ENCODE measurements at regions of chr1 and their contacts with region 1.

Region 1: DNA sequence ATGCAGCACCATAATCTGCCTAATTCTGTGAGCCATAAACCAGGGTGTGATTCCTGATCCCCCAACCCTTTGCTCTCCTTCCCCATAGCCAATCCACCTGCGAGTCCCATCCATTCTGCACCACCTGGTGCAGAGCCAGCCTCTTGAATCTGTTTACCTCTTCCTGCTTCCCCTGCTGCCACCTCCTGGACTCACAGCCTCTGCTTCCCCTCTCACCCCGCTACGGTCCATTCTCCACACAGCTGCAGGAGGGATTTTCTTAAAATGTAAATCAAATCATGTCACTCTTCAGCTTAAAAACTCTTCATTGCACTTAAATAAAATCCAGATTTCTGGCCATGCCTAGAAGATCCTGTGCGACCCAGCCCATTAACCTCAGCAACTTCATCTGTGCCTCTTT is 186.7 kb downstream of the FOXD2 start:
- DNase-seq: peak; percentile 10
- H3K4me3 ChIP-seq: no peak overlapping the region
- H3K27ac ChIP-seq: no peak overlapping the region
- H3K4me1 ChIP-seq: no peaks in the 10 kb centered on the region
- H3K27me3 ChIP-seq: no peaks in the 10 kb centered on the region
- CTCF ChIP-seq: peak; percentile 39 to 72

Region 2: DNA sequence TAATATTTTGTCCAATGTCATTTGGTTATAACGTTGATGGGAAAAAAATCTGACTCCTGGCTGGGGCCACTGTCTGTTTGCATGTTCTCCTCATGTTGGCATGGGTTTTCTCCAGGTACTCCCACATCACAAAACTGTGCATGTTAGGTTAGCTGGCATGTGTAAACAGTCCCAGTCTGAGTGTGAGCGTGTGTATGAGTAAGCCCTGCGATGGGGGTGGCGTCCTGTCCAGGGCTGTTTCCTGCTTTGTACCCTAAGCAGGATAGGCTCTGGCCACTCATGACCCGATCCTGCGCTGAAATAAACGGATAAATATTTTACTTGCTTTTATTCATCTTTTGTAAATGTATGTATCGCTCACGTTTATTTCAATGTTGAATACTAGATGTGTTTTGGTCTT is 919.1 kb before region 1 on chr1:
- CTCF ChIA-PET with region 1: no interaction called
- dilution Hi-C with region 1: no loop called
- in situ Hi-C with region 1: no loop called
- intact Hi-C with region 1: no loop called
- DNase-seq: no peak
- H3K4me3 ChIP-seq: no peak overlapping the region
- H3K27ac ChIP-seq: no peak overlapping the region
- H3K4me1 ChIP-seq: no peaks in the 10 kb centered on the region
- H3K27me3 ChIP-seq: no peaks in the 10 kb centered on the region
- CTCF ChIP-seq: no peak

Region 3: DNA sequence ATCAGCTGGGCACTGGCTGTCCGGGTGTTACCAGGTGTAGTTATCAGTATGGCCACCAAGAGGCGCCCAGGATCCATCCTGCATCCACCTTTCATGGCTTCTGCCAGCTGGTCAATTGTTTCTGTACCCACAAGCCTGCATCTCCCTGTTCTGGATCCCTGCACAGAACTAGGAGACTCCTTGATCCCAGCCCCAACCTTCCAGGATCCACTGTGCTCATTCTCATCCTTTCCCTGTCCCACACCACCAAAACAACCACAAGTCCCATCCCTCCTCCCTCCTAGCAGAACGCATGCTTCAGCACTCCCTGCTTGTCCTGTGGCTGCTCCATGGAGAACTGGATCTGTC is 235.7 kb before region 1 on chr1:
- CTCF ChIA-PET with region 1: interaction called, 4 read pairs
- dilution Hi-C with region 1: no loop called
- in situ Hi-C with region 1: no loop called
- intact Hi-C with region 1: loop called (anchors 2 kb)
- DNase-seq: peak; percentile 56
- H3K4me3 ChIP-seq: no peak overlapping the region
- H3K27ac ChIP-seq: no peak overlapping the region
- H3K4me1 ChIP-seq: no peaks in the 10 kb centered on the region
- H3K27me3 ChIP-seq: no peaks in the 10 kb centered on the region
- CTCF ChIP-seq: peak; percentile 87 to 89

Region 4: GRCh38 chr1:47532921-47533792 is 91.4 kb before region 1 on chr1:
- CTCF ChIA-PET with region 1: no interaction called
- dilution Hi-C with region 1: no loop called
- in situ Hi-C with region 1: loop called (anchors 10 kb)
- intact Hi-C with region 1: no loop called
- DNase-seq: no peak
- H3K4me3 ChIP-seq: peak overlapping the region in 1 of 3 experiments; percentile 16
- H3K27ac ChIP-seq: no peak overlapping the region
- H3K4me1 ChIP-seq: peaks cover 8% of the 10 kb centered on the region
- H3K27me3 ChIP-seq: no peaks in the 10 kb centered on the region
- CTCF ChIP-seq: no peak

Region 5: DNA sequence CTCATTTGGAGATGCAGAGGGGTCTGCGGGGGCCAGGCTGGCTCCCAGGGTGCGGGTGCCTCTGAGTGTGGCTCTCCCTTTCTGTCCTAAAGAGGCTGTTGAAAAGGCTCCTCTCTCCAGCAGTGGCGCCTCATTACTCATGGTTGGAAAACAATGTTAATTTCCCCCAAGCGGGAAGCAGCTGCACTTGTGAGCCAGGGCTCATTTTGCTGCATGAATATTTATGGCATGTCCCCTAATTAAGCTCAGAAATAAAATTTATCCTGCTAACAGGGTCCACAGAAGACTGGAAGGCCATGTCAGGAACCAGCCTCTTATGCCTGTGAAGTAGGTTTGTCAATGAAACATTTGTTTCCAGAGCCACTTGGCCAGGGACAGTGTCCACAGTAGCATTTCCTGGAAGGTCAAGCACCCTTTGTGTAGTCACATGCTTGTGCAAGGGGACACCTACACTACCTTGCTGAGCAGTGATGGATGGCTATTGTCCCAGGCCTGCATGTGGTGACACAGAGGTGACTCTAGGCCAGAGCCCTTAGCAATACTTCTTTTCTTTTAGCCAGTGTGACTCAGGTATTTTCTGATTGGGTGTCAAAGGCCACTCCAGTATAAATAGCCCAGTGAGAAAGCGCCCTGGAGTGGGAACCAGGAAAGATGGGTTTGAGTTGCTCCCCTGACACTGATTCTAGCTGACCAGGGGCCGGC is 72.4 kb after region 1 on chr1:
- CTCF ChIA-PET with region 1: no interaction called
- dilution Hi-C with region 1: loop called (anchors 5 kb)
- in situ Hi-C with region 1: no loop called
- intact Hi-C with region 1: no loop called
- DNase-seq: no peak
- H3K4me3 ChIP-seq: no peak overlapping the region
- H3K27ac ChIP-seq: no peak overlapping the region
- H3K4me1 ChIP-seq: no peaks in the 10 kb centered on the region
- H3K27me3 ChIP-seq: no peaks in the 10 kb centered on the region
- CTCF ChIP-seq: no peak

Region 6: GRCh38 chr1:48249868-48250267 is 625.3 kb after region 1 on chr1:
- CTCF ChIA-PET with region 1: no interaction called
- dilution Hi-C with region 1: no loop called
- in situ Hi-C with region 1: no loop called
- intact Hi-C with region 1: no loop called
- DNase-seq: no peak
- H3K4me3 ChIP-seq: no peak overlapping the region
- H3K27ac ChIP-seq: no peak overlapping the region
- H3K4me1 ChIP-seq: no peaks in the 10 kb centered on the region
- H3K27me3 ChIP-seq: peaks cover 4% of the 10 kb centered on the region
- CTCF ChIP-seq: peak; percentile 7 to 29